Panc1 (cell line): ENCODE measurements at regions of chr1 and their contacts with region 1.

Region 1: GRCh38 chr1:28642847-28643635 is at the start of gene TAF12:
- DNase-seq: peak; percentile 87
- ATAC-seq: peak; percentile 96
- H3K4me3 ChIP-seq: peak within 1 kb of the TSS; percentile 78 to 88
- H3K27ac ChIP-seq: peak within 1 kb of the TSS; percentile 95
- H3K4me1 ChIP-seq: peaks cover 7% of the 10 kb centered on the region; the same call in 1 of the 2 replicates
- H3K27me3 ChIP-seq: no peaks in the 10 kb centered on the region
- CTCF ChIP-seq: peak; percentile 75
- total RNA-seq, gene TAF12: 33.9 TPM

Region 2: GRCh38 chr1:28512058-28512611 is 130.9 kb before region 1 on chr1:
- CTCF ChIA-PET with region 1: no interaction called
- POLR2A ChIA-PET with region 1: interaction called, 10 read pairs
- in situ Hi-C with region 1: no loop called
- intact Hi-C with region 1: no loop called
- DNase-seq: no peak
- ATAC-seq: no peak
- H3K4me3 ChIP-seq: no peak overlapping the region
- H3K27ac ChIP-seq: peak overlapping the region; percentile 42
- H3K4me1 ChIP-seq: peaks cover 34% of the 10 kb centered on the region
- H3K27me3 ChIP-seq: no peaks in the 10 kb centered on the region
- CTCF ChIP-seq: no peak

Region 3: DNA sequence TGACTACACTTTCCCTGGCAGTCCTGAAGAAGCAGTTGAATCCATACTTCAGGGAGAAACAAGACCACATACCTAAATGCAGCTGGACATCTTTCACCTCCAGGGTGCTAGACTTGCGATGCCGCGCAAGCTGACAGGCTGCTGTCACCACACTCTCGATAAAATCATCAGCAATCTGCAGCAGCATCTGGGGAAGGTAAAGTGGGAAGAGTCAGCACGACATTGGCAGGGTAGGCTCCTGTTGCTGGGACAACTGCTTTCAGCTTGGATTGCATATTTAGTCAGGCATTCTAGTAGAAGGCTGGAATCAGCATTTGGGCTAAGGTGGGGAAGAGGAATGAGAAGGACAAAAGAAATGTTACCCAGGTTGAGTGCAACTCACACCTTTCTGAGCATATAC is 29.9 kb before region 1 on chr1:
- CTCF ChIA-PET with region 1: interaction called, 3 read pairs
- POLR2A ChIA-PET with region 1: interaction called, 12 read pairs
- in situ Hi-C with region 1: no loop called
- intact Hi-C with region 1: no loop called
- DNase-seq: no peak
- ATAC-seq: no peak
- H3K4me3 ChIP-seq: no peak overlapping the region
- H3K27ac ChIP-seq: no peak overlapping the region
- H3K4me1 ChIP-seq: no peaks in the 10 kb centered on the region
- H3K27me3 ChIP-seq: no peaks in the 10 kb centered on the region
- CTCF ChIP-seq: no peak

Region 4: GRCh38 chr1:28668191-28668955 is 25.3 kb after region 1 on chr1 and contains the start of gene GMEB1:
- CTCF ChIA-PET with region 1: no interaction called
- POLR2A ChIA-PET with region 1: interaction called, 12 read pairs
- in situ Hi-C with region 1: no loop called
- intact Hi-C with region 1: no loop called
- DNase-seq: peak; percentile 42
- ATAC-seq: peak; percentile 95
- H3K4me3 ChIP-seq: peak within 1 kb of the TSS; percentile 74 to 95
- H3K27ac ChIP-seq: peak within 1 kb of the TSS; percentile 100
- H3K4me1 ChIP-seq: peaks cover 13% of the 10 kb centered on the region
- H3K27me3 ChIP-seq: no peaks in the 10 kb centered on the region
- CTCF ChIP-seq: no peak
- total RNA-seq, gene GMEB1: 13.8 TPM

Region 5: DNA sequence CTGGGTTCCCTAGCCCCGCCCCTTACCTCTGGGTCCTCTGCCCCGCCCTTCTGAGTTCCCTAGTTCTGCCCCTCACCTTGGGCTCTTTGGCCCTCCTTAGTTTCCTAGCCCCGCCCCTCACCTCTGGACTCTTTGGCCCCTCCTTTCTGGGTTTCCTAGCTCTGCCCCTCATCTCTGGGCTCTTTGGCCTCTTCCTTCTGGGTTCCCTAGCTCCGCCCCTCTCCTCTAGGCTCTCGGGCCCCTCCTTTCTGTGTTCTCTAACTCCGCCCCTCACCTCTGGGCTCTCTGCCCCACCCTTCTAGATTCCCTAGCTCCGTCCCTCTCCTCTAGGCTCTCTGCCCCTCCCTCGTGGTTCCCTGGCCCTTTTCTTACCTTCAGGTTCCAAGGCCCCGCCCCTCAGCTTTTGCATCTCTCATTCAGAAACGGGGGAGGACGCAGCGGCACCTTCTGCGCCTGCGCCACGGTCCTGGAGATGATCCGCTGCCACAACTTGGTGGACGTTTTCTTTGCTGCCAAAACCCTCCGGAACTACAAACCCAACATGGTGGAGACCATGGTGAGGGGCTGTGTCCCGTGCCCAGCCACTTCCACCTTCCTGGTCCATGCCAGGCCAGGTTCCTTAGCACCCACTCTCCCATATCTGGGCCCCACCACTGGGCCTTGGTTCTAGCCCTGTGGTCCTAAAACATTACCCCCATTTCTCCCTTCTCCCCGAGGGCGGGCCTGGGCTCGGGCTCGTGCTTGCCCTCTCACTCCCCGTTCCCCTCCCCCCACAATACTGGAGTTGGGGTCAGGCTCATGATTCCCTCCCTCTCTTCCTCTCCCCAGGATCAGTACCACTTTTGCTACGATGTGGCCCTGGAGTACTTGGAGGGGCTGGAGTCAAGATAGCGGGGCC is 682.0 kb after region 1 on chr1:
- CTCF ChIA-PET with region 1: no interaction called
- POLR2A ChIA-PET with region 1: no interaction called
- in situ Hi-C with region 1: no loop called
- intact Hi-C with region 1: no loop called
- DNase-seq: no peak
- ATAC-seq: no peak
- H3K4me3 ChIP-seq: no peak overlapping the region
- H3K27ac ChIP-seq: no peak overlapping the region
- H3K4me1 ChIP-seq: no peaks in the 10 kb centered on the region
- H3K27me3 ChIP-seq: no peaks in the 10 kb centered on the region
- CTCF ChIP-seq: no peak